Caco-2 (cell line): ENCODE measurements at regions of chr4 and their contacts with region 1.

Region 1: GRCh38 chr4:8241895-8242696 is 27.5 kb upstream of the HTRA3 start:
- DNase-seq: peak; percentile 82 to 90
- H3K4me3 ChIP-seq: no peak overlapping the region
- H3K4me3 Mint-ChIP-seq: no peak overlapping the region
- H3K27ac Mint-ChIP-seq: no peak overlapping the region
- H3K4me1 ChIP-seq: peaks cover 33% of the 10 kb centered on the region
- H3K4me1 Mint-ChIP-seq: peaks cover 6% of the 10 kb centered on the region
- H3K27me3 ChIP-seq: no peaks in the 10 kb centered on the region
- H3K27me3 Mint-ChIP-seq: no peaks in the 10 kb centered on the region
- CTCF ChIP-seq: peak; percentile 83 to 92

Region 2: GRCh38 chr4:7917662-7918061 is 324.4 kb before region 1 on chr4:
- CTCF ChIA-PET with region 1: no interaction called
- POLR2A ChIA-PET with region 1: no interaction called
- intact Hi-C with region 1: no loop called
- DNase-seq: no peak
- H3K4me3 ChIP-seq: no peak overlapping the region
- H3K4me3 Mint-ChIP-seq: no peak overlapping the region
- H3K27ac Mint-ChIP-seq: no peak overlapping the region
- H3K4me1 ChIP-seq: no peaks in the 10 kb centered on the region
- H3K4me1 Mint-ChIP-seq: no peaks in the 10 kb centered on the region
- H3K27me3 ChIP-seq: no peaks in the 10 kb centered on the region
- H3K27me3 Mint-ChIP-seq: no peaks in the 10 kb centered on the region
- CTCF ChIP-seq: no peak

Region 3: DNA sequence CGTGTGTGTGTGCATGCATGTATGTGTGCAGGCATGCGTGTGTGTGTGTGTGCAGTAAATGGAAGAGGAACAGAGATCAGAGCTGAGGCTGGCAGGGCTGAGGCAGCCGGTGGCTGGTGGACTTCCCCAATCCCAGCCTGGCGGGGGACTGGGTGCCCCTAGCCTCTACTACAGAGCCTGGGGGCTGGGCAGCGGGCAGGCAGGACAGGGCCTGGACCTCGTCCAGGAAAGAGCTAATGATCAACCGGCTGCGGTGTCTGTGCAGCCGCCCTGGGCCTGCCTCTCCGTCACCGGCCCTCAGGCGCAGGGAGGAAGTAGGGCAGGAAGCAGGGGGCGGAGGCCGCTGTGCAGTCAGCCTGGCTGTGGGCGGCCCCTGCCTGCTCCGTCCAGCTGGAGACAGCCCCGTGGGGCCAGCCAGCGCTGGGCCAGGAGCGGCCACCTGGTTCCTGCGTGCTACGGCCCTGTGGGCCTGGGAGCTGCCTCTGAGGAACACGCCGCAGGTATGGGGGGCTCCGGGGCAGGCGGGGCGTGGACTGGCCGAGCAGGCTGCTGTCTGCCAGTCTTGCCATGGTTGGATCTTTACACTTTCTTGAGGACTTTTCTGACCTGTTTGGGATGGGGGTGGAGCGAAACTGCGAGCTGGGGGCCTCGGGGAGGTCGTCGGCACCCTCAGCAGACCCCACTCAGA is 43.0 kb before region 1 on chr4 and contains the start of gene SH3TC1:
- CTCF ChIA-PET with region 1: interaction called, 4 read pairs
- POLR2A ChIA-PET with region 1: no interaction called
- intact Hi-C with region 1: loop called (anchors 2 kb)
- DNase-seq: peak; percentile 86 to 88
- H3K4me3 ChIP-seq: peak within 1 kb of the TSS; percentile 44
- H3K4me3 Mint-ChIP-seq: peak within 1 kb of the TSS; percentile 81
- H3K27ac Mint-ChIP-seq: peak within 1 kb of the TSS; percentile 89
- H3K4me1 ChIP-seq: peaks cover 48% of the 10 kb centered on the region
- H3K4me1 Mint-ChIP-seq: peaks cover 17% of the 10 kb centered on the region
- H3K27me3 ChIP-seq: no peaks in the 10 kb centered on the region
- H3K27me3 Mint-ChIP-seq: no peaks in the 10 kb centered on the region
- CTCF ChIP-seq: no peak
- total RNA-seq, gene SH3TC1: 17.2 and 18.6 TPM in 2 replicates

Region 4: DNA sequence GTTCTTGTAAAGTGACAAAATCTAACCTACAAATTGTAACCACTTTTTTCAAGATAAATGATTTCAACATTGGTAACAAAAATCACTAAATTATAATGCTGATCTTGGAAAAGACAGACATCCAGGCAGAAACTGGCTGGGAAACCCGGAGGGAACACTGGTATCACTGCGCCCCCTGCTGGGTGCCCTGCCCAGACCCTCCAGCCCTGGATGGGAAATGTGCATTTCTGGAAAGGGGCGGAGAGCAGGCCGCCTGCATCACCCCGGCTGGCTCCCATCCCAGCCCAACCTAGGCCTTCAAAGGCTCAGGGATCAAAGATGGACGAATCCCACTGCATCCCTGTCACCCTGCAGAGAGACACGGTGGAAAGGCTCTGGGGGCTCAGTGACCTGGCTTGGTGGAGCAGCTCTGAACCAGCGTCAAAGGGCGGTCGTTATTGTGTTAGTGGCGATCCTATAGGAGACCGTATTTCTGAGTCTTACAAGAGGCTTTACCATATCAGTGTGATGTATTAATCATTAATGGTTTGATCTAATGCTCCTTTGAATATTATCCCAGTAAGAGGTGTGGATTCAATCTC is 161.2 kb after region 1 on chr4:
- CTCF ChIA-PET with region 1: interaction called, 27 read pairs
- POLR2A ChIA-PET with region 1: no interaction called
- intact Hi-C with region 1: loop called (anchors 1 kb)
- DNase-seq: peak; percentile 60 to 85
- H3K4me3 ChIP-seq: no peak overlapping the region
- H3K4me3 Mint-ChIP-seq: no peak overlapping the region
- H3K27ac Mint-ChIP-seq: no peak overlapping the region
- H3K4me1 ChIP-seq: no peaks in the 10 kb centered on the region
- H3K4me1 Mint-ChIP-seq: no peaks in the 10 kb centered on the region
- H3K27me3 ChIP-seq: no peaks in the 10 kb centered on the region
- H3K27me3 Mint-ChIP-seq: no peaks in the 10 kb centered on the region
- CTCF ChIP-seq: peak; percentile 79 to 87

Region 5: DNA sequence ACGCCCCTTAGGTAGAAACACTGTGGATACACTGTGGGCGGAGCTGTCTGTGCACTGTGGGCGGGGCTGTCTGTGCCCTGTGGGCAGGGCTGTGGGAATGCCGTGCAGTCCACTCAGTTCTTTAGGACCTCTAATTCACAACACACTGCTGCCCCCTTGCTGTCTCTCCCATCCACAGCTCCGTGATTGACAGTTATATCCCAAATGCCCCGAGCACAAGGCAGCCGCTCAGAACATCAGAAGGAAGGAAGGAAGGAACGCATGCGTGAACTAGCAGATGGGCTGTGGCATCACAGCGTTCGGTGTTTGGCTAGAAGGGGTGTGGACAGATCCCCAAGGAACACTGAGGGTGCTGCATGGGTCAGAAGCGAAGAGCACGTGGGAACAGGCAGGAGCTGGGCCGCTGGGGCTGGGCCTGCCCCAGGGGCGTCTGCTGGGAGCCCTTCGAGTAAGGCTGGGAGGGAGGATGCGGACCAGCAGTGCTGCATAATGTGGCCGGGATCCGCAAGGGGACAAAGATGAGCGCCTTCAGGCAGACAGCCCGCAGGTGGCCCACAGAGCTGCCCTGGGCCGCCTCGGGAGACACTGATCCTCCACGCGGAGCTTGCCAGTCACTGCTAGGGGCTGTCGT is 168.7 kb after region 1 on chr4:
- CTCF ChIA-PET with region 1: interaction called, 13 read pairs
- POLR2A ChIA-PET with region 1: no interaction called
- intact Hi-C with region 1: loop called (anchors 1 kb)
- DNase-seq: peak; percentile 89 to 91
- H3K4me3 ChIP-seq: no peak overlapping the region
- H3K4me3 Mint-ChIP-seq: no peak overlapping the region
- H3K27ac Mint-ChIP-seq: no peak overlapping the region
- H3K4me1 ChIP-seq: no peaks in the 10 kb centered on the region
- H3K4me1 Mint-ChIP-seq: no peaks in the 10 kb centered on the region
- H3K27me3 ChIP-seq: no peaks in the 10 kb centered on the region
- H3K27me3 Mint-ChIP-seq: no peaks in the 10 kb centered on the region
- CTCF ChIP-seq: peak; percentile 36 to 41